Caco-2 (cell line): ENCODE measurements at regions of chr16 and their contacts with region 1.

Region 1: DNA sequence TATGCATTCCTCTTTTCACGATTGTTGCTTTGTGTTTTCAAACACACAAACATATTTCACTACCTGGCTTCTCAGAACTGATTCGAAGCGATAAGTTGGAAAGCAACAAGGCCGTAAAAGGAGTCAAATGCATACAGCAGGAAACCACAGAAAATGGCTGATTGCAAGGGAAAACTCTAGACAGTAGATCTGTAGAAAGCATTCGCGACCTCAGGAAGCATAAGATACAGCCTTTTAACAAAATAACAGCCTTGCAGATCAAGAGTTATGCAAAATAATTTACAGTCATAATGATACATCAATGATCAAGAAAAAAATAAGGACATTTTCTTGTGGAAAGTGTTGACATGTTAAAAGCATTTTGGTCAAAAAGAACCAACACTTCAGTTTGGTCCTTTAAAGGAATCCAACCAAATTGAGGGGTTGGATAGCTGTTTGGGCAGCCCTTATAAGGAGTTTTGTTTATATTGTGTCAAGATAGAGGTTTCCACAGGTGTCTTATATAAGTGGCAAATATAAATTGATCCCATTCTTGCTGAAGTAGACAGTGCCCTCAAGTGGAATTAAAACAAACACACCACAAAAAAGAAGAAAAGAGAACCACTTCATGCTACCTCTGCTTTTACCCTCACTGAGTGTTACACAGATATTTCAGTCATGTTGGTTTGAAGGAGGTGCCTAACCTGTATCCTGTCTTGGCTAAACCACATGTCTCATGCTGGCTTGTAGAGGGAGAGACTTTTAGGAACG is 5.5 kb downstream of the CYLD start:
- DNase-seq: peak in 1 of 2 experiments; percentile 14
- H3K4me3 ChIP-seq: no peak overlapping the region
- H3K4me3 Mint-ChIP-seq: no peak overlapping the region
- H3K27ac Mint-ChIP-seq: no peak overlapping the region
- H3K4me1 ChIP-seq: no peaks in the 10 kb centered on the region
- H3K4me1 Mint-ChIP-seq: no peaks in the 10 kb centered on the region
- H3K27me3 ChIP-seq: no peaks in the 10 kb centered on the region
- H3K27me3 Mint-ChIP-seq: no peaks in the 10 kb centered on the region
- CTCF ChIP-seq: peak; percentile 26 to 39

Region 2: GRCh38 chr16:50368410-50369132 is 378.8 kb before region 1 on chr16 and contains the start of gene BRD7:
- CTCF ChIA-PET with region 1: interaction called, 11 read pairs
- POLR2A ChIA-PET with region 1: no interaction called
- intact Hi-C with region 1: loop called (anchors 1 kb)
- DNase-seq: peak in 1 of 2 experiments; percentile 86
- H3K4me3 ChIP-seq: peak within 1 kb of the TSS; percentile 55
- H3K4me3 Mint-ChIP-seq: peak within 1 kb of the TSS; percentile 90
- H3K27ac Mint-ChIP-seq: peak within 1 kb of the TSS; percentile 72
- H3K4me1 ChIP-seq: peaks cover 20% of the 10 kb centered on the region
- H3K4me1 Mint-ChIP-seq: peaks cover 30% of the 10 kb centered on the region
- H3K27me3 ChIP-seq: no peaks in the 10 kb centered on the region
- H3K27me3 Mint-ChIP-seq: no peaks in the 10 kb centered on the region
- CTCF ChIP-seq: peak; percentile 43 to 69
- total RNA-seq, gene BRD7: 147 and 170 TPM in 2 replicates

Region 3: DNA sequence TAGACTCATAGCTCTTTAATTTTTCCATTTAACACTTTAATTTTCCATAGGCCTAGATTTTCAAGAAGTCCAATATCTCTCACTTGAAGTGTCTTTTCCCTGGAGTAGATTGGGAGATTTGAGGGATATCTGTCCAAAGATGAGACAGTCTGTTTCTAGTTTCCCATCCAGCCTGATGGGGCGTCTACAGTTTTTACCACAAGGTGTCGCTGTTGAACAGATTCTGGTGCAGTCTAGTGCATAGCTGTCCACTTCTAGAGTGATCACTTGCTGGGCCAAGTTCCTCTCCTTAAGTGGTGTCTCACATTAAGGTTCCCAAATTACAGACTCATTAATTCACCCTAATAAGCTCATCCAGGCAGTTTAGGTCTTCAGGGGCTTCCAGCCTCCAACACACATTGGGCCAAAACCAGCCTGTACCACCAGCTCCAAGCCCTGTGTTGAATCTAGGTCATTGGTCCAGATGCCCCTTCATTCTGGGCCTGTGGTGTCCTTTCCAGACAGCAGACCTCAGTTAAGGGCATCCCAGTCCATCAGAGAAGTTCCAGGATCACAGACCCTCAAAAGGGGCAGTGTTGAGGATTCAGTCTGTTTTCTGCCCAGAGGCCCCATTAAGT is 75.6 kb before region 1 on chr16:
- CTCF ChIA-PET with region 1: interaction called, 12 read pairs
- POLR2A ChIA-PET with region 1: no interaction called
- intact Hi-C with region 1: loop called (anchors 1 kb)
- DNase-seq: peak in 1 of 2 experiments; percentile 69
- H3K4me3 ChIP-seq: no peak overlapping the region
- H3K4me3 Mint-ChIP-seq: no peak overlapping the region
- H3K27ac Mint-ChIP-seq: no peak overlapping the region
- H3K4me1 ChIP-seq: peaks cover 10% of the 10 kb centered on the region; the same call in 1 of the 2 replicates
- H3K4me1 Mint-ChIP-seq: peaks cover 21% of the 10 kb centered on the region
- H3K27me3 ChIP-seq: no peaks in the 10 kb centered on the region
- H3K27me3 Mint-ChIP-seq: no peaks in the 10 kb centered on the region
- CTCF ChIP-seq: peak; percentile 57 to 74

Region 4: DNA sequence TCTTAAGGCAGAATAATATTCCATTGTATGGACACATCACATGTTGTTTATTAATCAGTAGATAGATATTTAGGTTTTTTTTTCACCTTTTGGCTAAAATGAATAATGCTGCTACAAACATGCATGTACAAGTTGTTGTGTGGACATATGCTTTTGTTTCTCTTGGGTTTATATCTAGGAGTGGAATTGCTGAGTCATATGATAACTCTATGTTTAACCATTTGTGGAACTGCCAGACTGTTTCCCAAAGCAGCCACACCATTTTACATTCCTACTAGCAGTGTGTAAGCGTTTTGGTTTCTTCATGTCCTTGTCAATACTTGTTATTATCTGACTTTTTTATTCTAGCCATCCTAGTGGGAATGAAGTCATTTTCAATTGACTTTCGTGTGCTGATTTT is 15.8 kb after region 1 on chr16:
- CTCF ChIA-PET with region 1: no interaction called
- POLR2A ChIA-PET with region 1: no interaction called
- intact Hi-C with region 1: no loop called
- DNase-seq: no peak
- H3K4me3 ChIP-seq: no peak overlapping the region
- H3K4me3 Mint-ChIP-seq: no peak overlapping the region
- H3K27ac Mint-ChIP-seq: no peak overlapping the region
- H3K4me1 ChIP-seq: no peaks in the 10 kb centered on the region
- H3K4me1 Mint-ChIP-seq: no peaks in the 10 kb centered on the region
- H3K27me3 ChIP-seq: no peaks in the 10 kb centered on the region
- H3K27me3 Mint-ChIP-seq: no peaks in the 10 kb centered on the region
- CTCF ChIP-seq: no peak